B cell (primary cell): ENCODE measurements at regions of chr19 and their contacts with region 1.

Region 1: GRCh38 chr19:46704379-46705076 is 12.4 kb downstream of the PRKD2 start:
- DNase-seq: peak; percentile 85
- ATAC-seq: peak; percentile 93
- H3K4me3 ChIP-seq: no peak overlapping the region
- H3K4me3 Mint-ChIP-seq: no peak overlapping the region
- H3K27ac ChIP-seq: peak overlapping the region in 1 of 2 donors; percentile 48
- H3K27ac Mint-ChIP-seq: peak overlapping the region; percentile 87
- H3K4me1 ChIP-seq: peaks cover 3 to 8% of the 10 kb centered on the region in 2 donors
- H3K4me1 Mint-ChIP-seq: peaks cover 13% of the 10 kb centered on the region
- H3K27me3 ChIP-seq: no peaks in the 10 kb centered on the region
- H3K27me3 Mint-ChIP-seq: no peaks in the 10 kb centered on the region
- CTCF ChIP-seq: peak; percentile 93

Region 2: GRCh38 chr19:46717034-46717723 is 12.7 kb after region 1 on chr19 and contains the start of gene PRKD2:
- CTCF ChIA-PET with region 1: interaction called, 353 read pairs
- POLR2A ChIA-PET with region 1: interaction called, 13 read pairs
- intact Hi-C with region 1: loop called (anchors 1 kb)
- DNase-seq: peak; percentile 89
- ATAC-seq: peak; percentile 48
- H3K4me3 ChIP-seq: peak within 1 kb of the TSS; percentile 77 to 99 (median 92)
- H3K4me3 Mint-ChIP-seq: peak within 1 kb of the TSS; percentile 97
- H3K27ac ChIP-seq: peak within 1 kb of the TSS; percentile 89 to 92
- H3K27ac Mint-ChIP-seq: peak within 1 kb of the TSS; percentile 95
- H3K4me1 ChIP-seq: peaks cover 58 to 75% of the 10 kb centered on the region in 2 donors
- H3K4me1 Mint-ChIP-seq: peaks cover 66% of the 10 kb centered on the region
- H3K27me3 ChIP-seq: no peaks in the 10 kb centered on the region
- H3K27me3 Mint-ChIP-seq: no peaks in the 10 kb centered on the region
- CTCF ChIP-seq: no peak
- total RNA-seq, gene PRKD2: 185 and 192 TPM in 2 replicates

Region 3: DNA sequence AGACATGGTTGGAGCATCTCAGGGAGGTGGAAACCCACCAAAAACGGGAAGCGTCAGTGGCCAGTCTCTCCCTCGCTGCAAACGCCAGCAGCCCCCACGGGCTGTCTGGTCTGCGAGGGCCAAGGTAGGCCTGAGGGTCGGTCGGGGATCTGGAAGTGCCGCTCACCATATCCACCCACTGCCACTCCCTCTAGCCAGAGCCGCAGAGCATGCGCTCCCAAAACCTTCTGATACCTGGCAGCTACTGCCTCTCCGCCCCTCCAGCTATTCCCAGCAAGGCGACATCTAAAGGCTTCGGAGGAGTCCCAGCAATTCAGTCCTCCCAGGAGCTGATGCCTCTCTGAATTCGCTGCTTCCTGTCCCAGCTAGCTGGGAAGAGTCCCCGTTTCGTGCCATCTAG is 36.9 kb after region 1 on chr19:
- CTCF ChIA-PET with region 1: interaction called, 13 read pairs
- POLR2A ChIA-PET with region 1: no interaction called
- intact Hi-C with region 1: no loop called
- DNase-seq: no peak
- ATAC-seq: no peak
- H3K4me3 ChIP-seq: no peak overlapping the region
- H3K4me3 Mint-ChIP-seq: no peak overlapping the region
- H3K27ac ChIP-seq: no peak overlapping the region
- H3K27ac Mint-ChIP-seq: no peak overlapping the region
- H3K4me1 ChIP-seq: peaks cover 10 to 32% of the 10 kb centered on the region in 2 donors
- H3K4me1 Mint-ChIP-seq: peaks cover 44% of the 10 kb centered on the region
- H3K27me3 ChIP-seq: no peaks in the 10 kb centered on the region
- H3K27me3 Mint-ChIP-seq: no peaks in the 10 kb centered on the region
- CTCF ChIP-seq: no peak

Region 4: DNA sequence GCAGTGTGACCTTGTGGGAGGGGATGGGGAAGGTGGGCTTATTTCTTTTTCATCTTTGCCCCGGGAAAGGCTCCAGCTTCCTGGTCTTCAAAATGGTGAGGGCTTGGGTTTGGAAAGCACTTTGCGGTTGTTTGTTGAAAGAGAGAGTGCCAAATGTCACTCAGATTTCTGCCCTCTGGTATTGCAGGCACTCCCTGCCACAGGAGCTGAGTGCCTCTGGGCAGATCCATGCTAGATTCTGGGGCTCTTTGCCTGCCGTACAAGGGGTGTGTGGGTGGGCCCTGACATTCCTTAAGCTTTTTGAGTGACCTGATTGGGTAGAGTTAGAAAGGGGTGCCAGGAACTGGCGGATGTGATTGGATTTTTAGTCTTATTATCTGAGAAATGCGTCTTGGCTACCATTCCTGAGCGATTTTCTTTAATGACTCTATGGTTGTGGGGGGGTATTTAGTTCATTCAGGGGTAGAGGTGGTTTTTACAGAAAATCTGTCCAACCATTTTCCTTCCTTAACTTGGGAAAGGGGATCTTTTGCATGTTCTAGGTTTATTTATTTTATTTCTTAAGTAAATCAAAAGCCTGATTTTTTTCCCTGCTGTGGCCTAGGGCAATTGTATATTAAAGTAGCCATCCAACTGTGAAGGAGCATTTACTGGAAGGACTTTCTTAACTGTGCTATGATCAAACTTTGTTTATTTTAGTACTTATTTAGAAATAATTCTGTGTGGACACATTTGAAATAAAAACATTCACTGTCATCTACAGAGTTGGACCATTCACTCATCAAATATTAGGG is 159.5 kb after region 1 on chr19:
- CTCF ChIA-PET with region 1: no interaction called
- POLR2A ChIA-PET with region 1: no interaction called
- intact Hi-C with region 1: no loop called
- DNase-seq: no peak
- ATAC-seq: no peak
- H3K4me3 ChIP-seq: no peak overlapping the region
- H3K4me3 Mint-ChIP-seq: no peak overlapping the region
- H3K27ac ChIP-seq: no peak overlapping the region
- H3K27ac Mint-ChIP-seq: no peak overlapping the region
- H3K4me1 ChIP-seq: peaks cover 26 to 30% of the 10 kb centered on the region in 2 donors
- H3K4me1 Mint-ChIP-seq: peaks cover 34% of the 10 kb centered on the region
- H3K27me3 ChIP-seq: no peaks in the 10 kb centered on the region
- H3K27me3 Mint-ChIP-seq: no peaks in the 10 kb centered on the region
- CTCF ChIP-seq: no peak